Naive thymus-derived CD4-positive, alpha-beta T cell (primary cell): ENCODE measurements at regions of chr12 and their contacts with region 1.

Region 1: DNA sequence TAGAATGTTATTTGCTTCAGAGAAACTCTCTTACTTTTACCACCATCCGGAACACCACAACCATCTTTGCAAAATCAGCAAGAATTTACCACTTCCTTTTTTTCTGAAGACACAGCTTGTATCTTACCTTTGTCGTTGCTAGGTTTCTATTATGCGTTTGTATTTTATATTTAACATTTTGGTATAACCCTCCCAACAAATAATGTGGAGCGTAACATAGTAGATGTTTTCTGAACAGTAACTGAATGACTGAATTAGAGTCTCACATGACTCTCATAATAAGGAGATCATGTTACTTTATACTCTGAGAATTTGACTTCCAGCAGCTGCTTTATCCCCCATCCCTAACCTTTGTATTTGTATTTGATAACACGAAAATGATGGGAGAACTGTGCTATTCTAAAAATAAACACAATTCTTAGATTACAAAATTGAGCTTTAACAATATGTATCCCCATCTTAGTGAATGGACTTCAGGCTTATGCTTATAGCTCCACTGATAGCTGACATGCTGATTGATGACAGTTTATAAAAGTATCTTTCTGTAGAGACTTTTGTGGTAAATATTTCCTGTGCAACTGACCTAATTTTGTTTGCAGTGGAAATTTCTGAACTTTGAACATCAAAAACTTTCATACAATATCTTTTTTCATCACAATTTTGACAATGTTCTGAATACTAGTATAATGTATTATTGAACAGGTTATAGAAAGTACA is 7.9 kb upstream of the KLRB1 start:
- DNase-seq: peak in 7 of 9 donors; percentile 28 to 82 (median 69)
- ATAC-seq: peak; percentile 97
- H3K4me3 ChIP-seq: peak overlapping the region; percentile 35
- H3K4me3 Mint-ChIP-seq: peak overlapping the region; percentile 4 to 86 (median 78)
- H3K27ac ChIP-seq: peak overlapping the region; percentile 70
- H3K27ac Mint-ChIP-seq: peak overlapping the region; percentile 92 to 99 (median 96)
- H3K4me1 ChIP-seq: peaks cover 13 to 35% of the 10 kb centered on the region in 2 donors
- H3K4me1 Mint-ChIP-seq: peaks cover 21 to 88% (median 79%) of the 10 kb centered on the region in 7 donors
- H3K27me3 ChIP-seq: no peaks in the 10 kb centered on the region
- H3K27me3 Mint-ChIP-seq: no peaks in the 10 kb centered on the region

Region 2: DNA sequence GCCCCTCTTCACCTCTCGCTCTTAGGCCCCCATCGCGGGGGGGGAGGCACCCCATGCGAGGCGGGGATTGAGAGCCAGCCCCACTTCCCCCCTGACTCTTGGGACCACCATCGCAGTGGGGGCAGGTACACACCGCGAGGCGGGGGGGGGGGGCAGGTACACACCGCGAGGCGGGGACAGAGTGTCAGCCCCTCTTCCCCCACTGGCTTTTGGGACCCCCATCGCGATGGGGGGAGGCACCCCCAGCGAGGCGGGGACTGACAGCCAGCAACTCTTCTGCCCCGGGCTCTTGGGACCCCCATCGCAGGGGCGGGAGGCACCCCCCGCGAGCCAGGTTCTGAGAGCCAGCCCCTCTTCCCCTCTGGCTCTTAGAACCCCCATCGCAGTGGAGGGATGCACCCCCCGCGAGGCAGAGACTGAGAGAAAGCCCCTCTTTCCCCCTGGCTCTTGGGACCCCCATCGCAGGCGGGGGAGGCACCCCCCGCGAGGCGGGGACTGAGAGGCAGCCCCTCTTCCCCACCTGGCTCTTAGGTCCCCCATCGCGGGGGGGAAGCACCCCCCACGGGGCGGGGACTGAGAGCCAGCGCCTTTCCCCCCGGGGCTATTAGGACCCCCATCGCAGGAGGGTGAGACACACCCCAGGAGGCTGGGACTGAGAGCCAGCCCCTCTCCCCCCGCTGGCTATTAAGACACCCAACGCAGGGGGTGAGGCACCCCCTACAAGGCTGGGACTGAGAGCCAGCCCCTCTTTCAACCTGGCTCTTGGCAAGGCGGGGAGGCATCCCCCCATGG is 210.9 kb before region 1 on chr12:
- CTCF ChIA-PET with region 1: no interaction called
- POLR2A ChIA-PET with region 1: no interaction called
- intact Hi-C with region 1: no loop called
- DNase-seq: no peak
- ATAC-seq: no peak
- H3K4me3 ChIP-seq: no peak overlapping the region
- H3K4me3 Mint-ChIP-seq: no peak overlapping the region
- H3K27ac ChIP-seq: no peak overlapping the region
- H3K27ac Mint-ChIP-seq: peak overlapping the region in 1 of 9 donors; percentile 38
- H3K4me1 ChIP-seq: no peaks in the 10 kb centered on the region
- H3K4me1 Mint-ChIP-seq: no peaks in the 10 kb centered on the region
- H3K27me3 ChIP-seq: no peaks in the 10 kb centered on the region
- H3K27me3 Mint-ChIP-seq: no peaks in the 10 kb centered on the region

Region 3: DNA sequence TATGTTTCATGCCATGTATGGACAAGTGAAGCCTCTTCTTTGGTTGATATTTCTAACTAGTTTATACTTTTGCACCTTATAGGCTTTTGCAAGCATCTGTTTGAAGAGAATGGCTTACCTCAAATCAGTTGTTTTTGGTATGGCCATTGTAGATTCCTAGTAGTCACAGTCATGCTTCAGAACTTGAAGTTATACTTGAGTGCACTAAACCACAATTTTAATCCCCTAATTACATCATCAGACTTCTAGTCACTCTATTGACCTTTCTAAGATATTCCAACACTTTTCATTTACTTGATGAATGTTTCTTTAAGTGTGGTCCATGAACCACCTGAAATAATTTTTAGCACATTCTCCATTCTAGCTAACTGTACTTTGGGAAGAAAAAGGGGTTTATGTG is 10.7 kb after region 1 on chr12:
- CTCF ChIA-PET with region 1: no interaction called
- POLR2A ChIA-PET with region 1: interaction called, 4 read pairs
- intact Hi-C with region 1: loop called in 1 of 2 experiments (anchors 1 kb)
- DNase-seq: no peak
- ATAC-seq: no peak
- H3K4me3 ChIP-seq: no peak overlapping the region
- H3K4me3 Mint-ChIP-seq: no peak overlapping the region
- H3K27ac ChIP-seq: no peak overlapping the region
- H3K27ac Mint-ChIP-seq: no peak overlapping the region
- H3K4me1 ChIP-seq: peaks cover 0 to 4% of the 10 kb centered on the region in 2 donors
- H3K4me1 Mint-ChIP-seq: peaks cover 3 to 22% (median 9%) of the 10 kb centered on the region in 7 donors
- H3K27me3 ChIP-seq: no peaks in the 10 kb centered on the region
- H3K27me3 Mint-ChIP-seq: peaks cover 0 to 23% (median 0%) of the 10 kb centered on the region in 5 donors

Region 4: DNA sequence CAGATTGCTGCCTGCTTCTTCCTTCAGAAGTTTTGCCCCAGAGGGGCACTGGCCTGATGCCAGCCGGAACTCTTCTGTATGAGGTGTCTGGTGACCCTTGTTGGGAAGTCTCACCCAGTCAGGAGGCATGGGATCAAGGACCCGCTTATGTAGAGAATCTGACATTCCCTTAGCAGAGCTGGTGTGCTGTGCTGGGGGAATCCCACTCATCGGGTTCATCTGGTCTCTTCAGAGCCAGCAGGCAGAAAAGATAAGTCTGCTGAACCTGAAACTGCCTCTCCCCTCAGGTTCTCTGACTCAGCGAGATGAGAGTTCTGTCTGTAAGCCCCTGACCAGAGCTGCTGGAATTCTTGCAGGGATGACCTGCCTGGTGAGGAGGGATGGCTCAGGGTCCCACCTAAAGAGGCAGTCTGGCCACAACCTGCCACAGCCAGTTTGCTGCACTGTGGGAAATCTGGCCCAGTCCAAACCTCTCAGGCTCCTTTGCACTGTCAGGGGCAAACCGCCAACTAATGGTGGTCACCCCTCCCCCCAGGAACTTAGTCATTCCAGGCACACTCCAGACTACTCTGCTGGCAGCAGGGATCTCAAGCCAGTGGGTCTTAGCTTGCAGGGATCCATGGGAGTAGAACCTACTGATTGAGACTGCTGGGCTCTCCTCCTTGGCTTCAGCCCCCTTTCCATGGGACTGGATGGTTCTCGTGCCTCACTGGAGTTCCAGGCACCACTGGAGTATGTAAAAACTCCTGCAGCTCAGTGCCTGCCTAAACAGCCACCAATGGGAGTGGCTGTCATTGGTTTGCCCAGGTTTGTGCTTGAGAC is 58.0 kb after region 1 on chr12:
- CTCF ChIA-PET with region 1: no interaction called
- POLR2A ChIA-PET with region 1: no interaction called
- intact Hi-C with region 1: no loop called
- DNase-seq: peak in 7 of 9 donors; percentile 36 to 67 (median 45)
- ATAC-seq: peak; percentile 63
- H3K4me3 ChIP-seq: peak overlapping the region; percentile 80
- H3K4me3 Mint-ChIP-seq: peak overlapping the region; percentile 89 to 99 (median 92)
- H3K27ac ChIP-seq: peak overlapping the region; percentile 83
- H3K27ac Mint-ChIP-seq: peak overlapping the region; percentile 90 to 99 (median 95)
- H3K4me1 ChIP-seq: peaks cover 30 to 38% of the 10 kb centered on the region in 2 donors
- H3K4me1 Mint-ChIP-seq: peaks cover 42 to 80% (median 69%) of the 10 kb centered on the region in 7 donors
- H3K27me3 ChIP-seq: no peaks in the 10 kb centered on the region
- H3K27me3 Mint-ChIP-seq: peaks cover 0 to 8% (median 0%) of the 10 kb centered on the region in 5 donors

Region 5: GRCh38 chr12:9856151-9856550 is 240.6 kb after region 1 on chr12:
- CTCF ChIA-PET with region 1: no interaction called
- POLR2A ChIA-PET with region 1: no interaction called
- intact Hi-C with region 1: no loop called
- DNase-seq: no peak
- ATAC-seq: no peak
- H3K4me3 ChIP-seq: no peak overlapping the region
- H3K4me3 Mint-ChIP-seq: no peak overlapping the region
- H3K27ac ChIP-seq: no peak overlapping the region
- H3K27ac Mint-ChIP-seq: peak overlapping the region in 4 of 9 donors; percentile 20 to 60 (median 45)
- H3K4me1 ChIP-seq: peaks cover 3 to 10% of the 10 kb centered on the region in 2 donors
- H3K4me1 Mint-ChIP-seq: peaks cover 25 to 84% (median 63%) of the 10 kb centered on the region in 7 donors
- H3K27me3 ChIP-seq: no peaks in the 10 kb centered on the region
- H3K27me3 Mint-ChIP-seq: no peaks in the 10 kb centered on the region

Region 6: DNA sequence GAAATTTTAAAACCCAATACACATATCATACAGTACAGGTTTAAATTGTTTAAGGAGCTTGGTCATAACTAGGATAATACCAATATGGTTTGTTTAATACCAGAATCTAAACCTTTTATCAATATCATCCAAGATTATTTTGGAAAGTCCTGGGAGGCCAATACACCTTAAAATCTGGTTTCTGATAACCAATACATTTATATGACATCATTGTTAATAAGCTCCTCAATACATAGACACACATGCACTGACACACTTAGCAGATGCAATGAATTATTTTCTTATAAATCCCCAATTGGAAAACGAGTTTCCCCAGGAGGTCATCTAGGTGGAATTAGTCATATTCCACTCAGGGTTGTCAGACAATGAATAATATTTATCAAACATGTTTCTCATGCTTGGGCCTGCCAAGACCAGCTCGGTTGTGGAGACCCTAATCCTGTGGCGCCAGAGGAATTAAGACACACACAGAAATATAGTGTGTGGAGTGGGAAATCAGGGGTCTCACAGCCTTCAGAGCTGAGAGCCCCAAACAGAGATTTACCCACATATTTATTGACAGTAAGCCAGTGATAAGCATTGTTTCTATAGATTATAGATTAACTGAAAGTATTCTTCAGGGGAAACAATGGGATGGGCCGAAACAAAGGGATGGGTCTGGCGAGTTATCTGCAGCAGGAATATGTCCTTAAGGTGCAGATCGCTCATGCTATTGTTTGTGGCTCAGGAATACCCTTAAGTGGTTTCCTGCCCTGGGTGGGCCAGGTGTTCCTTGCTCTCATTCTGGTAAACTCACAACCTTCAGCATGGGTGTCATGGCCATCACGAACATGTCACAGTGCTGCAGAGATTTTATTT is 1434.3 kb after region 1 on chr12:
- CTCF ChIA-PET with region 1: no interaction called
- POLR2A ChIA-PET with region 1: no interaction called
- intact Hi-C with region 1: no loop called
- DNase-seq: no peak
- ATAC-seq: no peak
- H3K4me3 ChIP-seq: no peak overlapping the region
- H3K4me3 Mint-ChIP-seq: no peak overlapping the region
- H3K27ac ChIP-seq: no peak overlapping the region
- H3K27ac Mint-ChIP-seq: no peak overlapping the region
- H3K4me1 ChIP-seq: no peaks in the 10 kb centered on the region
- H3K4me1 Mint-ChIP-seq: peaks cover 0 to 15% (median 4%) of the 10 kb centered on the region in 7 donors
- H3K27me3 ChIP-seq: no peaks in the 10 kb centered on the region
- H3K27me3 Mint-ChIP-seq: no peaks in the 10 kb centered on the region